ENCODE measurements at regions of chr7 and their contacts with region 1.

Region 1: GRCh38 chr7:107168233-107169119 is at the start of gene HBP1:
- DNase-seq: peak; percentile 80 to 100 (median 99)
- ATAC-seq: peak; percentile 87
- H3K4me3 ChIP-seq: peak within 1 kb of the TSS; percentile 84
- H3K4me3 Mint-ChIP-seq: peak within 1 kb of the TSS; percentile 92 to 100 (median 96)
- H3K27ac ChIP-seq: peak within 1 kb of the TSS; percentile 100
- H3K27ac Mint-ChIP-seq: peak within 1 kb of the TSS; percentile 98 to 100 (median 99)
- H3K4me1 ChIP-seq: peaks cover 28 to 35% of the 10 kb centered on the region in 2 donors
- H3K4me1 Mint-ChIP-seq: peaks cover 25 to 50% (median 41%) of the 10 kb centered on the region in 7 donors
- H3K27me3 ChIP-seq: no peaks in the 10 kb centered on the region
- H3K27me3 Mint-ChIP-seq: peaks cover 0 to 28% (median 0%) of the 10 kb centered on the region in 5 donors
- total RNA-seq, gene HBP1: 34.6 to 219 (median 124) TPM

Region 2: GRCh38 chr7:106071356-106071998 is 1097.0 kb before region 1 on chr7:
- CTCF ChIA-PET with region 1: no interaction called
- POLR2A ChIA-PET with region 1: interaction called, 10 read pairs
- intact Hi-C with region 1: loop called in 1 of 2 experiments (anchors 1 kb)
- DNase-seq: peak in 8 of 9 donors; percentile 50 to 75 (median 66)
- ATAC-seq: peak; percentile 97
- H3K4me3 ChIP-seq: peak overlapping the region; percentile 70
- H3K4me3 Mint-ChIP-seq: peak overlapping the region; percentile 74 to 84 (median 79)
- H3K27ac ChIP-seq: peak overlapping the region; percentile 80
- H3K27ac Mint-ChIP-seq: peak overlapping the region; percentile 93 to 99 (median 97)
- H3K4me1 ChIP-seq: peaks cover 26 to 49% of the 10 kb centered on the region in 2 donors
- H3K4me1 Mint-ChIP-seq: peaks cover 38 to 75% (median 64%) of the 10 kb centered on the region in 7 donors
- H3K27me3 ChIP-seq: no peaks in the 10 kb centered on the region
- H3K27me3 Mint-ChIP-seq: no peaks in the 10 kb centered on the region

Region 3: DNA sequence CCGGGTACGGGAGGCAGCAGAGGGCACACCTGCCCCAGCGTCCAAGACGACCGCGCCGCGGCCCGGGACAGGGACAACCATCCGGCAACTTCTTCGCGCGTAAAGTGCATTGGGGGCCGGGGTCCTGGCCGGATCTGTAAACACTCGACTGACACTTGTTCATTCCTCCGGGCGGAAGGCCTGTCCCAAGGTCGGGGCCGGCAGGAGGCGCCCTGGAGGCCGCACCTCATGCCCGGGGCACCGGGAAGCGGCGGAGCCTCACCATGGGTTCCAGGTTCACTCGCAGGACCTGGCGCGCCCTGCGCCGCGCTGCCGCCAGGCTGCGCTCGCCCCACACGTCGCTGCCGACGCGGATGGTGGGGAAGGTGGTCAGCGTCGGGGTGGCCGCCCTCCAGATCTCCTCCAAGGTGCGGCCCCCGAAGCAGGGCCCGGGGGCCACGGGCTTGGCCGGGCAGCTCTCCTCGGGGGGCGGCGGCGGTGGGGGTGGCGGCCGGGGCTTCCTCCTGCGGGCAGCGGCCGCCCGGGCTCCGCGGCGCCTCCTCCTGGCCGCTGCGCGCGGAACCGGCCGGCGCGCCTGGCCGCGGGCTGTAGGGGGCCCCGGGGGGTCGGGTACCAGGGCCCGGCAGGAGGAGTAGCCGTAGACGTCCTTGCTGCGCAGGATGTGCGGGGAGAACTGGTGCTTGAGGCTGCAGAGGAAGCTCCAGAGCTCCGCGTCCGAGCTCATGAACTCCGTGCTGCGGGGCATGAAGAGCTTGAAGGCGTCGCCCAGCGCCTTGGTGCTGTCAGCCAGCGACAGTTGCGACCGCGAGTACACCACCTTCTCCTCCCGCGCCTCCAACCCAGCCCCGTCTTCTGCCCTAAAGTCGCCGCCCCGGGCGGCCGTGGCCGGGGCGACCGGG is 508.3 kb before region 1 on chr7:
- CTCF ChIA-PET with region 1: no interaction called
- POLR2A ChIA-PET with region 1: interaction called, 11 read pairs
- intact Hi-C with region 1: loop called (anchors 1 kb)
- DNase-seq: peak; percentile 58 to 84 (median 68)
- ATAC-seq: peak; percentile 72
- H3K4me3 ChIP-seq: peak overlapping the region; percentile 73
- H3K4me3 Mint-ChIP-seq: peak overlapping the region; percentile 85 to 97 (median 91)
- H3K27ac ChIP-seq: peak overlapping the region; percentile 68
- H3K27ac Mint-ChIP-seq: peak overlapping the region; percentile 86 to 97 (median 92)
- H3K4me1 ChIP-seq: peaks cover 13 to 16% of the 10 kb centered on the region in 2 donors
- H3K4me1 Mint-ChIP-seq: peaks cover 0 to 41% (median 29%) of the 10 kb centered on the region in 7 donors
- H3K27me3 ChIP-seq: no peaks in the 10 kb centered on the region
- H3K27me3 Mint-ChIP-seq: peaks cover 0 to 3% (median 0%) of the 10 kb centered on the region in 5 donors

Region 4: DNA sequence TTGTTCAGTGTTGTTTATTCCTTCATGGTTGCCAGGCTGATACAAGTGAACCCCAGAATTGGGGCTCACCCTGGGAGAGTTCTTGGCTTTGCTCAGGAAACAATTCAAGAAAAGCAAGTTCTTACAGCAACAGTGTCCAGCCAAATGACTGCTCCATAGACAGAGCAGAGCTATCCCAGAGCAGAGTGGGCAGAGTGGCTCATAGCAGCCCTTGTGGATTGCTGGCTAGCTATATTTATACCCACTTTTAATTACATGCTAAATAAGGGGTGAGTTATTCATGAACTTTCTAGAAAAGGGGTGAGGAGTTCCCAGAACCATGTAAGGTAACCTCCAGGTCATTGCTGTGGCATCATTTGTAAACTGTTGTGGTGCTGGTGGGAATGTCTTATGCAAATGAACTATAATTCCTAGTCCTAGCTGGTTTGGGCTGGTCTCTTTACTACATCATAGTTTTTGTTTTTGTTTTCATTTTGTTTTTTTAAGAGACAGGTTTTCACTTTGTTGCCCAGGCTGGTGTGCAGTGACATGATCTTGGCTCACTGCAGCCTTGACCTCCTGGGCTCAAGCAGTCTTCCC is 59.6 kb before region 1 on chr7:
- CTCF ChIA-PET with region 1: no interaction called
- POLR2A ChIA-PET with region 1: no interaction called
- intact Hi-C with region 1: no loop called
- DNase-seq: no peak
- ATAC-seq: no peak
- H3K4me3 ChIP-seq: no peak overlapping the region
- H3K4me3 Mint-ChIP-seq: no peak overlapping the region
- H3K27ac ChIP-seq: no peak overlapping the region
- H3K27ac Mint-ChIP-seq: no peak overlapping the region
- H3K4me1 ChIP-seq: no peaks in the 10 kb centered on the region
- H3K4me1 Mint-ChIP-seq: no peaks in the 10 kb centered on the region
- H3K27me3 ChIP-seq: no peaks in the 10 kb centered on the region
- H3K27me3 Mint-ChIP-seq: peaks cover 0 to 6% (median 0%) of the 10 kb centered on the region in 5 donors

Region 5: DNA sequence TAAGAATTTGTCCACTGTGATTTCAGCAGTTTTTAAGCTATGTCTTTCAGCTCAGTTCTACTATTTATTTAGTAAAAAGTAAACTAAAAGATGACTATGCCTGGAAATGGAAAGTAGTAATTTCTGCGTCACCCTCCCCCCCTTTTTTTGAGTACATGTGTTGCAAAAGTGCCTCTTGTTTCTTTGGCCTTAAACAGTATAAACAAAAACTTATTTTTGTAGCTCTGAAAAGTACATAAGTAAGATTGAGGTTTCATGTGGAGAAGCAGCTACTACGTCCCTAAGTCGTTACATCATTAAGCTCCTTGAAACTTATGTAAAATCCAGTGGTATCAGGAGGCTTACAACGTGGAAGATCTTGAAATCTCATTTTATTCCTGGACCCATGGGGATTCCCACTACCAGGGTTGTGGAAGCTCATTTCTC is 46.0 kb before region 1 on chr7:
- CTCF ChIA-PET with region 1: no interaction called
- POLR2A ChIA-PET with region 1: interaction called, 28 read pairs
- intact Hi-C with region 1: loop called (anchors 1 kb)
- DNase-seq: no peak
- ATAC-seq: no peak
- H3K4me3 ChIP-seq: no peak overlapping the region
- H3K4me3 Mint-ChIP-seq: no peak overlapping the region
- H3K27ac ChIP-seq: no peak overlapping the region
- H3K27ac Mint-ChIP-seq: no peak overlapping the region
- H3K4me1 ChIP-seq: peaks cover 4 to 16% of the 10 kb centered on the region in 2 donors
- H3K4me1 Mint-ChIP-seq: peaks cover 12 to 25% (median 20%) of the 10 kb centered on the region in 7 donors
- H3K27me3 ChIP-seq: no peaks in the 10 kb centered on the region
- H3K27me3 Mint-ChIP-seq: peaks cover 0 to 12% (median 0%) of the 10 kb centered on the region in 5 donors

Region 6: GRCh38 chr7:107194049-107194448 is 25.6 kb after region 1 on chr7:
- CTCF ChIA-PET with region 1: interaction called, 3 read pairs
- POLR2A ChIA-PET with region 1: interaction called, 24 read pairs
- intact Hi-C with region 1: no loop called
- DNase-seq: no peak
- ATAC-seq: no peak
- H3K4me3 ChIP-seq: no peak overlapping the region
- H3K4me3 Mint-ChIP-seq: no peak overlapping the region
- H3K27ac ChIP-seq: no peak overlapping the region
- H3K27ac Mint-ChIP-seq: peak overlapping the region in 1 of 9 donors; percentile 66
- H3K4me1 ChIP-seq: no peaks in the 10 kb centered on the region
- H3K4me1 Mint-ChIP-seq: peaks cover 0 to 16% (median 7%) of the 10 kb centered on the region in 7 donors
- H3K27me3 ChIP-seq: no peaks in the 10 kb centered on the region
- H3K27me3 Mint-ChIP-seq: no peaks in the 10 kb centered on the region

Region 7: GRCh38 chr7:107879400-107880035 is 711.0 kb after region 1 on chr7:
- CTCF ChIA-PET with region 1: no interaction called
- POLR2A ChIA-PET with region 1: interaction called, 3 read pairs
- intact Hi-C with region 1: loop called in 1 of 2 experiments (anchors 5 kb)
- DNase-seq: peak in 5 of 9 donors; percentile 30 to 50 (median 42)
- ATAC-seq: peak; percentile 85
- H3K4me3 ChIP-seq: no peak overlapping the region
- H3K4me3 Mint-ChIP-seq: no peak overlapping the region
- H3K27ac ChIP-seq: no peak overlapping the region
- H3K27ac Mint-ChIP-seq: peak overlapping the region in 1 of 9 donors; percentile 53
- H3K4me1 ChIP-seq: peaks cover 3 to 11% of the 10 kb centered on the region in 2 donors
- H3K4me1 Mint-ChIP-seq: peaks cover 5 to 34% (median 24%) of the 10 kb centered on the region in 7 donors
- H3K27me3 ChIP-seq: peaks cover 0 to 4% of the 10 kb centered on the region in 2 donors
- H3K27me3 Mint-ChIP-seq: peaks cover 0 to 23% (median 9%) of the 10 kb centered on the region in 5 donors

Measured in naive thymus-derived CD4-positive, alpha-beta T cell (primary cell).